ENCODE measurements at regions of chr5 and their contacts with region 1.

Region 1: DNA sequence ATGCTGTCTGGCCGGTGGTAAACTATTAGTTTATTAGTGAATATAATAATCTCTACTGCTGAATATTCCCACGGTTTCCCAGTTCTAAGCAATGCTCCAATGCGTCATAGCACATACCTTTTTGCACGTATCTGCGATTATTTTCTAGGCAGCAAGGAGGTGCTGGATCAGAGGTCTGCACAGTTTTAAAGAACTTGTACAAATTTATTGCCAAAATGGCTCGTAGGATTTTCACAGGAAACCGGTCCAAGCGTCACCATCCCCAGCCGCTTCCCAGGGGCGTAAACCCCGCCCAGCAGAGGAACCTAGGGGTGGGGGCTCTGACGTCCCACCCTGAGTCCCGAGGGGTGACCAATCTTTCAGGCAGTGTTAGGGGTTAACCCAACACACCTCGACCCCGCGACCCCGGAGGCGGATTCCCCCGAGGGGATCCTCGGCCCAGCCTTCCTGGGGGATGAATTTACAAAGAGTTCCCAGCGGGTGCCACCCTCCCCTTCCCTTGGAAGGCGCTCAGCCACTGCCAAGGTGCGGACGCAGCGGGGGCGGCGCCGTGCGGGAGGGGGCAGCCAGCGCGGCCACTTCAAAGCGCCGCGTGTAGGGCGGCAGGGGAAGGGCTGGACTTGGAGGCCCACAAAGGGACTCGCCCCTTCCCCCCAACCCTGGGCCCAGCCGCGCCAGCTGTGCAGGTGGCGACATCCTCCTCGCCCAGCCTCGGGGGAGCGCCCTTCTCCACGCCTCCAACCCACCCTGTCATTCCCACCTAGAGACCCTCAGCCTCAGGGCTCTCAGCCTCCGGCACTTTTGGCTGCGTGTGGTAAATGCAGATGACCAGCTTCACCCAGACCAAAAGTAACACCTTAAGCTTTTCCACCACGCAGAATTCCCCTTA is 43.5 kb upstream of the TCF7 start:
- DNase-seq: peak; percentile 78
- H3K4me3 Mint-ChIP-seq: peak overlapping the region; percentile 83
- H3K27ac Mint-ChIP-seq: peak overlapping the region; percentile 95
- H3K4me1 Mint-ChIP-seq: peaks cover 57% of the 10 kb centered on the region
- H3K27me3 Mint-ChIP-seq: peaks cover 3% of the 10 kb centered on the region

Region 2: DNA sequence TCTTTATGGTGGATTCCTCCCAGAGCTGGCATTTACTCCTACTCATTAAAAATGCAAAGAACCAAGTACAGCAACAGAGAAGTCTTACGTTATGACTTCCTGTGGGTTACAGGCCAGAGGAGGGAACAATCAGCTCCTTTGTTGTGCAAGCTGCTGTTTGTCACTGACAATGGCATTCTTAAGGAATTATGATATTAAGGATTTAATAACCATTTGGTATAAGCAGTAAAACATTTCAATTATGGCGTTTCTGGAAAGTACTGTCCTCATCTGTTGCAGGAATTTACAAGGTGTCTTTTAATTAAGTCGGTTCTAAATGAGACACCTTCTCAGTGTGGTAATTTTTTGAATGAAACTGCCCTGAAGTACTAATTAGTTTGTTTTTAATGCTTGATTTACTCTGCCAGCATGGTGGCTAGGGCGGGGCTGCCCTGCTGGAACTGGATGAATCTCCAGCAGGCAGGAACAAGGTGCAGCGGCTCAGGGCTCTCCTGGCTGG is 17.1 kb before region 1 on chr5:
- intact Hi-C with region 1: loop called (anchors 2 kb)
- DNase-seq: no peak
- H3K4me3 Mint-ChIP-seq: peak overlapping the region; percentile 40
- H3K27ac Mint-ChIP-seq: peak overlapping the region; percentile 70
- H3K4me1 Mint-ChIP-seq: peaks cover 24% of the 10 kb centered on the region
- H3K27me3 Mint-ChIP-seq: no peaks in the 10 kb centered on the region

Region 3: GRCh38 chr5:134086943-134087305 is 16.0 kb after region 1 on chr5:
- intact Hi-C with region 1: loop called (anchors 1 kb)
- DNase-seq: peak; percentile 94
- H3K4me3 Mint-ChIP-seq: peak overlapping the region; percentile 65
- H3K27ac Mint-ChIP-seq: peak overlapping the region; percentile 95
- H3K4me1 Mint-ChIP-seq: peaks cover 68% of the 10 kb centered on the region
- H3K27me3 Mint-ChIP-seq: peaks cover 4% of the 10 kb centered on the region

Region 4: GRCh38 chr5:134100283-134101091 is 29.5 kb after region 1 on chr5:
- intact Hi-C with region 1: loop called (anchors 1 kb)
- DNase-seq: peak; percentile 94
- H3K4me3 Mint-ChIP-seq: peak overlapping the region; percentile 59
- H3K27ac Mint-ChIP-seq: peak overlapping the region; percentile 90
- H3K4me1 Mint-ChIP-seq: peaks cover 58% of the 10 kb centered on the region
- H3K27me3 Mint-ChIP-seq: peaks cover 3% of the 10 kb centered on the region

Measured in activated CD4-positive, alpha-beta T cell treated with anti-CD3 and anti-CD28 coated beads, Interleukin-2, amount 10 ng/mL, durations not matched to agents 24 days and 14 days (primary cell).